ENCODE measurements at regions of chr7 and their contacts with region 1.

Region 1: DNA sequence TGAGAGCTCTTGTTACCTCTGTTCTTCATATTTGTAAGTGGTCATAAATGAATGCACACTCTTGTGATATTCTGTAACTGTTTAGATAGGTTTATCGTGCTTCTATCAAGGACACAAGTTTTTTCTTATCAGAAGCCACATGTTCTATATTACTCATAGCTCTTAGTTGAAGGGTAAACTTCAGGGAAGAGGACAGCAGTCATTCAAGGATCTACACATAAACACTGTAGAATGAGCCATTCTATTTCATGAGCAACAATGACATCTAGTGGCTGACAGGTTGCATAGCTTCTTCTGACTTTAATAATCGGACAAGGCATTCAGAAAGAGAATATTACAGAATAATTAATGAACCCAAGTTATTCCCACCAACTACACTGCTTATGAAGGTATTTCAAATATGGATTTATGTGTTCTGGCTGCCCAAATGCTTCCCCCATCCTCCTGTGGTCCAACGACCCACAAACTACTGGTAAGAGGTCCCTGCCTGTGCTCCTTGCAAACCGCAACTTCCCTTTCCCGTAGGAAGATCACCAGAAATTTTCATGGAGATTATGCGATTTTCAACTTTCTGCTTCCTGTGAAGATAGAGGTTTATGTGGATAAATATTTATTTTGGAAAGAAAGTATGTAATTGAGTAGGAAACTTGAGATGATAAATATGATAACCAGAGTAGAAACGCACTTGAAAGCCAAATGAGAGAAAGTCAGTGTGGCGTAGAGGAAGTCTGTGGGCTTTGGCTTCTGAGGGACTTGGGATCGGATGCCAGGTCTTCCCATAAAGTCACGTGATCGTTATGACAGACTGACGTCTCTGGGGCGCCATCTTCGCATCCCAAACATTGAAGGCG is 16.8 kb upstream of the ABCB5 start:
- DNase-seq: no peak
- H3K4me3 Mint-ChIP-seq: no peak overlapping the region
- H3K27ac Mint-ChIP-seq: no peak overlapping the region
- H3K4me1 Mint-ChIP-seq: peaks cover 2% of the 10 kb centered on the region
- H3K27me3 Mint-ChIP-seq: no peaks in the 10 kb centered on the region

Region 2: DNA sequence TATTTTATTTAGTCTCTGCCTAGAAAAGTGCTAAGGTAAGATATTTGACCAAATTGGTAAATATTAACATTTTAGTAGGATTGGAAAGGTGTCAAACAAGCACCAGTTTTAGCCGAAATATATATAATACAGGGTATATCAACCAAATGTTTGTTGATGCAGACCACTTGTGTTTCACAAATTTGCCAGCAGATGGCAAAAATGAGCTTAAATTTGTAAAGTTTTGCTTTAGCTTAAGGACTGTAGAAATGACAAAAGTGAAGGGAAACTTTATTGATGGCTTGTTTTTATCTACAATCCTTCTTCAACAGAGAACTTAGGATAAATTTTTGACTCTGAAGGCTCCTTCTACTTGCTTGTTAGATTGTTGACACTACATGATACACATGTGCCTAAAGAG is 885.0 kb before region 1 on chr7:
- intact Hi-C with region 1: loop called (anchors 1 kb)
- DNase-seq: no peak
- H3K4me3 Mint-ChIP-seq: no peak overlapping the region
- H3K27ac Mint-ChIP-seq: no peak overlapping the region
- H3K4me1 Mint-ChIP-seq: peaks cover 13% of the 10 kb centered on the region
- H3K27me3 Mint-ChIP-seq: peaks cover 10% of the 10 kb centered on the region

Region 3: DNA sequence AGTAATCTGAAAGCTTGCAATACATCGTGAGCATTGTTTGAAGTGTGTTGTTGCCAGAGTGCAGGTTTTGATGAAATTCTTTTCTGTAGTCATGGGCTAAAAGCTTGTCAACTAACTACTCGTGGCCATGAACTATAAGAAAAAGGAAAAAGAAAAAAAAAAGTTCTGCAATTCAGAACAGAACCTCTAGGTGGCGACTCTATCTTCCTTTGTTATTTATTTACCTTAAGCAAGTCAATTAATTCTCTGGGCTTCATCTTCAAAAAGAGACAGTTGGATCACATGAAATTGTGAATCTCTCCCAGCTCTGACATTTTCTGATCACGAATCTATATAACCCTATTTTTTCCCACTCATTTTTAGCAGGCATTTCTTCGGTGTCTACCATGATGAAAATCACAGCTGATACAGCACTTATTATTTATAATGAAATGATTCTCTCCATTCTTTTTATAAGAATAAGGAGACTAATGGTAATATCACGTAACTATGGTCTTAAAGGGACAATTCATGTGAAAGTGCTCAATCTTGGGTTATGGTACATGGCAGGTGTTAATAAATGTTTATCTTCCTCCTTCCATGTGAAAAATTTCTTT is 844.1 kb before region 1 on chr7:
- intact Hi-C with region 1: loop called (anchors 2 kb)
- DNase-seq: no peak
- H3K4me3 Mint-ChIP-seq: no peak overlapping the region
- H3K27ac Mint-ChIP-seq: no peak overlapping the region
- H3K4me1 Mint-ChIP-seq: no peaks in the 10 kb centered on the region
- H3K27me3 Mint-ChIP-seq: no peaks in the 10 kb centered on the region

Region 4: GRCh38 chr7:20474249-20474648 is 124.4 kb before region 1 on chr7:
- intact Hi-C with region 1: no loop called
- DNase-seq: no peak
- H3K4me3 Mint-ChIP-seq: no peak overlapping the region
- H3K27ac Mint-ChIP-seq: no peak overlapping the region
- H3K4me1 Mint-ChIP-seq: no peaks in the 10 kb centered on the region
- H3K27me3 Mint-ChIP-seq: no peaks in the 10 kb centered on the region

Region 5: GRCh38 chr7:20624666-20625385 is 26.1 kb after region 1 on chr7:
- intact Hi-C with region 1: no loop called
- DNase-seq: no peak
- H3K4me3 Mint-ChIP-seq: no peak overlapping the region
- H3K27ac Mint-ChIP-seq: no peak overlapping the region
- H3K4me1 Mint-ChIP-seq: no peaks in the 10 kb centered on the region
- H3K27me3 Mint-ChIP-seq: no peaks in the 10 kb centered on the region

Measured in activated T-helper 2 cell treated with anti-CD3 and anti-CD28 coated beads, Interferon-gamma antibody, Interleukin-2, Interleukin-4, amounts not matched to agents 10 μg/mL and 5 μg/mL and 100 μg/mL, durations not matched to agents 14 hours and 24 hours and 36 hours (primary cell).